ENCODE measurements at regions of chr1 and their contacts with region 1.

Region 1: GRCh38 chr1:35564037-35564883 is 6.7 kb downstream of the NCDN start:
- DNase-seq: peak; percentile 70 to 78 (median 74)
- H3K4me3 ChIP-seq: no peak overlapping the region
- H3K4me3 Mint-ChIP-seq: peak overlapping the region in 1 of 8 donors; percentile 0
- H3K27ac ChIP-seq: no peak overlapping the region
- H3K27ac Mint-ChIP-seq: peak overlapping the region; percentile 68 to 93 (median 70)
- H3K4me1 ChIP-seq: peaks cover 3% of the 10 kb centered on the region
- H3K4me1 Mint-ChIP-seq: peaks cover 17 to 41% (median 24%) of the 10 kb centered on the region in 4 donors
- H3K27me3 ChIP-seq: no peaks in the 10 kb centered on the region
- H3K27me3 Mint-ChIP-seq: no peaks in the 10 kb centered on the region

Region 2: DNA sequence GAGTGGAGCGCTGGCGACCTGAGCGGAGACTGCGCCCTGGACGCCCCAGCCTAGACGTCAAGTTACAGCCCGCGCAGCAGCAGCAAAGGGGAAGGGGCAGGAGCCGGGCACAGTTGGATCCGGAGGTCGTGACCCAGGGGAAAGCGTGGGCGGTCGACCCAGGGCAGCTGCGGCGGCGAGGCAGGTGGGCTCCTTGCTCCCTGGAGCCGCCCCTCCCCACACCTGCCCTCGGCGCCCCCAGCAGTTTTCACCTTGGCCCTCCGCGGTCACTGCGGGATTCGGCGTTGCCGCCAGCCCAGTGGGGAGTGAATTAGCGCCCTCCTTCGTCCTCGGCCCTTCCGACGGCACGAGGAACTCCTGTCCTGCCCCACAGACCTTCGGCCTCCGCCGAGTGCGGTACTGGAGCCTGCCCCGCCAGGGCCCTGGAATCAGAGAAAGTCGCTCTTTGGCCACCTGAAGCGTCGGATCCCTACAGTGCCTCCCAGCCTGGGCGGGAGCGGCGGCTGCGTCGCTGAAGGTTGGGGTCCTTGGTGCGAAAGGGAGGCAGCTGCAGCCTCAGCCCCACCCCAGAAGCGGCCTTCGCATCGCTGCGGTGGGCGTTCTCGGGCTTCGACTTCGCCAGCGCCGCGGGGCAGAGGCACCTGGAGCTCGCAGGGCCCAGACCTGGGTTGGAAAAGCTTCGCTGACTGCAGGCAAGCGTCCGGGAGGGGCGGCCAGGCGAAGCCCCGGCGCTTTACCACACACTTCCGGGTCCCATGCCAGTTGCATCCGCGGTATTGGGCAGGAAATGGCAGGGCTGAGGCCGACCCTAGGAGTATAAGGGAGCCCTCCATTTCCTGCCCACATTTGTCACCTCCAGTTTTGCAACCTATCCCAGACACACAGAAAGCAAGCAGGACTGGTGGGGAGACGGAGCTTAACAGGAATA is 13.1 kb after region 1 on chr1:
- CTCF ChIA-PET with region 1: interaction called, 18 read pairs
- POLR2A ChIA-PET with region 1: interaction called, 9 read pairs
- intact Hi-C with region 1: no loop called
- DNase-seq: peak; percentile 61 to 76 (median 71)
- H3K4me3 ChIP-seq: peak overlapping the region; percentile 42 to 50
- H3K4me3 Mint-ChIP-seq: peak overlapping the region; percentile 82 to 96 (median 88)
- H3K27ac ChIP-seq: peak overlapping the region; percentile 58
- H3K27ac Mint-ChIP-seq: peak overlapping the region; percentile 32 to 93 (median 77)
- H3K4me1 ChIP-seq: peaks cover 28% of the 10 kb centered on the region
- H3K4me1 Mint-ChIP-seq: peaks cover 10 to 31% (median 20%) of the 10 kb centered on the region in 4 donors
- H3K27me3 ChIP-seq: no peaks in the 10 kb centered on the region
- H3K27me3 Mint-ChIP-seq: peaks cover 1 to 2% of the 10 kb centered on the region in 2 donors

Region 3: DNA sequence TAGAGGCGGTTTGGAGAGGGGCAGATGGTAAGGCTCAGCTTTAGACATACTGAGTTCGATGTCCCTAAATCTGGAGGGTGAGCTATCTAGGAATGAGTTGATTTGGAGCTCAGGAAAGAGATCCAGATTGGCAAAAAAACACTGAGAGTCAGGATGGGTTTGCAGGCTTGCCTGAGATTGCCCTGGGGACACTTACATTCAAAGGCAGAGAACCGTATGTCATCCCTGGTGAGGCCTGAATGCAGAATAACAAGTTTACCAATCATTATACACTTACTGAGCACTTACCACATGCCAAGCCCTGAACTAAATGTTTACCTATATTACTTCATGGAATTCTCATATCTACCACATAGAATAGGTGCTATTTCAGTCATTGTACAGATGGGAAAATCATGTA is 36.3 kb after region 1 on chr1:
- CTCF ChIA-PET with region 1: interaction called, 8 read pairs
- POLR2A ChIA-PET with region 1: no interaction called
- intact Hi-C with region 1: loop called (anchors 1 kb)
- DNase-seq: no peak
- H3K4me3 ChIP-seq: no peak overlapping the region
- H3K4me3 Mint-ChIP-seq: no peak overlapping the region
- H3K27ac ChIP-seq: no peak overlapping the region
- H3K27ac Mint-ChIP-seq: peak overlapping the region in 3 of 7 donors; percentile 22 to 72 (median 58)
- H3K4me1 ChIP-seq: no peaks in the 10 kb centered on the region
- H3K4me1 Mint-ChIP-seq: peaks cover 0 to under 1% (median 0%) of the 10 kb centered on the region in 4 donors
- H3K27me3 ChIP-seq: no peaks in the 10 kb centered on the region
- H3K27me3 Mint-ChIP-seq: no peaks in the 10 kb centered on the region

Region 4: DNA sequence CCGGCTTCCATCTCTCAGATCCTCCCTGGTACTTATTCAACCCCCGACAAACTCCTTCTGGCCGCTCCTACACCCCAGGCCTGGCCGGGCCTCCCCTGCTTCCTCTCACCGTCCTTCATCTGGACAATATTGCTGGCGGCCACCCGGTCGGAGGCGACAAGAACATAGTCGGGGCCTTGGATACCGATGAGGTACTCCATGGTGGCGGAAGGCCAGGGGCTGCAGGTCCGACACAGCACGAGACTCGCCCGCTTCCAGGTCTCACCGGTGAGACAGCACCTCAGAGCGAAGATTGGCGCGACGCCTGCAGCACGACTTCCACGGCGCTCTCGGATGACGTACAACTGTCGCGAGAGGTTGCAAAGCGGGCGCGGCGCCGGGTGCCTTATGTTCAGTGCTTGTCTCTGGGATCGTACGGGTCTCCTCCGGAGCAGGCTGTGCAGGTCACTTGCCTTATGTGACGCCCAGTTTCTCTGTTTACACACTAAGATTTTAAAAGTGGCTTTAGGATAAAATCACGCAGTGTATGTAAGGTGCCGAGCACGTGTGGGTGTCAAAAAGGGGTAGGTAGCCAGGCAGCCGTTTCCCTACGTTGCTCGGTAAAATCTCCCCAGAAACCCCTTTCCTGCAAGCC is 77.1 kb after region 1 on chr1 and contains the start of gene PSMB2:
- CTCF ChIA-PET with region 1: interaction called, 4 read pairs
- POLR2A ChIA-PET with region 1: no interaction called
- intact Hi-C with region 1: loop called (anchors 10 kb)
- DNase-seq: peak; percentile 94 to 95 (median 94)
- H3K4me3 ChIP-seq: peak within 1 kb of the TSS; percentile 94 to 98
- H3K4me3 Mint-ChIP-seq: peak within 1 kb of the TSS; percentile 98 to 100 (median 99)
- H3K27ac ChIP-seq: peak within 1 kb of the TSS; percentile 81
- H3K27ac Mint-ChIP-seq: peak within 1 kb of the TSS; percentile 98 to 100 (median 99)
- H3K4me1 ChIP-seq: peaks cover 47% of the 10 kb centered on the region
- H3K4me1 Mint-ChIP-seq: peaks cover 26 to 44% (median 36%) of the 10 kb centered on the region in 4 donors
- H3K27me3 ChIP-seq: peaks cover 5% of the 10 kb centered on the region
- H3K27me3 Mint-ChIP-seq: peaks cover 9 to 23% of the 10 kb centered on the region in 2 donors
- total RNA-seq, gene PSMB2: 25.5 to 28.2 TPM

Region 5: GRCh38 chr1:35769759-35770446 is 205.6 kb after region 1 on chr1 and contains the start of gene CLSPN:
- CTCF ChIA-PET with region 1: interaction called, 82 read pairs
- POLR2A ChIA-PET with region 1: interaction called, 4 read pairs
- intact Hi-C with region 1: loop called (anchors 1 kb)
- DNase-seq: peak; percentile 90 to 94 (median 92)
- H3K4me3 ChIP-seq: peak within 1 kb of the TSS; percentile 74 to 84
- H3K4me3 Mint-ChIP-seq: peak within 1 kb of the TSS; percentile 95 to 99 (median 98)
- H3K27ac ChIP-seq: peak within 1 kb of the TSS; percentile 82
- H3K27ac Mint-ChIP-seq: peak within 1 kb of the TSS; percentile 86 to 97 (median 96)
- H3K4me1 ChIP-seq: peaks cover 7% of the 10 kb centered on the region
- H3K4me1 Mint-ChIP-seq: peaks cover 6 to 17% (median 10%) of the 10 kb centered on the region in 4 donors
- H3K27me3 ChIP-seq: no peaks in the 10 kb centered on the region
- H3K27me3 Mint-ChIP-seq: no peaks in the 10 kb centered on the region
- total RNA-seq, gene CLSPN: 0.28 to 0.90 TPM

Region 6: DNA sequence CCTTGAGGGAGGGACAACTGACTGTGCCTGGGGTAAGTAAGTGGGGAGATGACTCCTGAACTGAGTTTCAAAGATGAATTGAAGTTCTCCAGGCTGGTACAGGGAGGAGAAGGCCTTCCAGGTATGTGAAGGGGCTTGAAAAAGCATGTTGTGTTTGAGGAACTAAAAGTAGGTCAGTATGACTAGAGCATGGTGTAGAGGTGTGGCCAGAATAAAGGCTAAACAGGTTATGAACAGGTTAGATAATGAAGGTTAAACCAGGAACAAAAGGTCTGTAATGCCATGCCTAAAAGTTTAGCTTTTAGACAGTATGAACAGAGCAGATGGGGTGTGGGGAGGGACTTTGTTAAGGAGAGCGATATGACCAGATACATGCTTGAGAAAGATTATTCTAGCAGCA is 212.8 kb after region 1 on chr1:
- CTCF ChIA-PET with region 1: interaction called, 82 read pairs
- POLR2A ChIA-PET with region 1: no interaction called
- intact Hi-C with region 1: loop called (anchors 1 kb)
- DNase-seq: peak in 2 of 5 donors; percentile 6 to 8
- H3K4me3 ChIP-seq: no peak overlapping the region
- H3K4me3 Mint-ChIP-seq: peak overlapping the region in 5 of 8 donors; percentile 2 to 26 (median 15)
- H3K27ac ChIP-seq: no peak overlapping the region
- H3K27ac Mint-ChIP-seq: peak overlapping the region; percentile 27 to 88 (median 81)
- H3K4me1 ChIP-seq: peaks cover 24% of the 10 kb centered on the region
- H3K4me1 Mint-ChIP-seq: peaks cover 11 to 32% (median 15%) of the 10 kb centered on the region in 4 donors
- H3K27me3 ChIP-seq: no peaks in the 10 kb centered on the region
- H3K27me3 Mint-ChIP-seq: no peaks in the 10 kb centered on the region